Activated CD8-positive, alpha-beta T cell treated with anti-CD3 and anti-CD28 coated beads, Interleukin-2, amount 10 ng/mL, durations not matched to agents 7 days and 5 days (primary cell): ENCODE measurements at regions of chr1 and their contacts with region 1.

Region 1: GRCh38 chr1:11838349-11839272 is 9.0 kb downstream of the NPPA start:
- DNase-seq: peak; percentile 81
- ATAC-seq: peak; percentile 94
- H3K4me3 Mint-ChIP-seq: no peak overlapping the region
- H3K27ac Mint-ChIP-seq: no peak overlapping the region
- H3K4me1 Mint-ChIP-seq: peaks cover 6% of the 10 kb centered on the region
- H3K27me3 Mint-ChIP-seq: no peaks in the 10 kb centered on the region

Region 2: DNA sequence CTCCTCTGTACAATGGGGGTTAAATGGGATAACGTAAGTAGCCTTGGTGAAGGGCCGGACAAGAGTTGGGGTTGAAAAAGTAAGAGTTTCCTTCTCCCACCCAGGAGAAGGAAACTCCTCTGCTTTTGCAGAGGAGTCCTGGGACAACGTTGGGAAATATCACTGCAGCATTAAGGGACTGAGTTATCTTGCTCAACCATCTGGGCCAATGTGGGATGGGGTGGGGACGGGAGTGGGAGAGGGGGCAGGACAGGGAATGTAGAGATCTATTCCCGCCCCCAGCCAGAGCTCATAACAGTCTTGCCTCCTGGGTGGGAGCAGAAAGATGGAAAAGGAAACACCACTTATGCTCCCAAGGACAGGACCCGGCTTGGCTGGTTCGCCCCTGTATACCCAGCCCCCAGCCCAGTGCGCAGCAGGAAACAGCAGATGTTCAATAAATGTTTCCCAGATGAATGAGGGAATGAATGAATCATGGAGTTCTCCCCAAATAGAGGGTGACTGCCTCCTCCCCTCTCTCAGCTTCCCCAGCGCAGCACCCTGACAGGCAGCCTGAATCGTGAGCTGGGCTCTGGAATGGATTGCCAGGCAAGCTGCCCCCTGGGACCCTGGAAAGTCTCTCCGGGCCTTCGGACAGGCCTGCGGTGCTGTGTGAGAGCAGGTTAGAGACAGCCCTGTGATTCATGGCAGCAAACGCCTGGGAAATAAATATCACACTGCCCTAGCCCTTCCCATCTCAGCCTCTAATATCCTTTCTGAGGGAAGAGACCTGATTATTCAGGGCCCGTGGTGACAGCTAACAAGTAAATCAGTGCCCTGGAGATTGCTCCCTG is 209.2 kb before region 1 on chr1:
- CTCF ChIA-PET with region 1: no interaction called
- POLR2A ChIA-PET with region 1: no interaction called
- DNase-seq: no peak
- ATAC-seq: no peak
- H3K4me3 Mint-ChIP-seq: no peak overlapping the region
- H3K27ac Mint-ChIP-seq: no peak overlapping the region
- H3K4me1 Mint-ChIP-seq: no peaks in the 10 kb centered on the region
- H3K27me3 Mint-ChIP-seq: peaks cover 9% of the 10 kb centered on the region

Region 3: DNA sequence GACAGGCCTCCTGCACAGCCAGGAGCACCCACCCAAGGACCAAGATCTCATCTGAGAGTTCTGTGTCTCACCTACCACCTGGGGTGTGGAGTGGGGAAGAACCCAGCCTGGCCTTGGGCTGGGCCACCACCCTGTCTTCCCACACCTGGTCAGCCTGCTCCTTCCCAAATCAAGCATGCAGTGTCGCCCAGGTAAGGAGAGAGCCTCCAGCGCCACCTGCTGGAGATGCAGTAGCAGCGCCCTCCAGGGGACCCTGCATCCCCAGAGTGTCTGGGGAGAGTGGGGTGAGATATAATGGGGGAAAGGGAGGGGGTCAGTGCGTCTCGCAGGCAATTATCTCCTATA is 55.3 kb after region 1 on chr1:
- CTCF ChIA-PET with region 1: interaction called, 20 read pairs
- POLR2A ChIA-PET with region 1: no interaction called
- DNase-seq: peak; percentile 78
- ATAC-seq: peak; percentile 89
- H3K4me3 Mint-ChIP-seq: no peak overlapping the region
- H3K27ac Mint-ChIP-seq: no peak overlapping the region
- H3K4me1 Mint-ChIP-seq: no peaks in the 10 kb centered on the region
- H3K27me3 Mint-ChIP-seq: peaks cover 27% of the 10 kb centered on the region